HEK293 (cell line): ENCODE measurements at regions of chr12 and their contacts with region 1.

Region 1: GRCh38 chr12:2783936-2784600 is 10.7 kb upstream of the FKBP4 start:
- H3K4me3 ChIP-seq: no peak overlapping the region
- H3K27ac ChIP-seq: no peak overlapping the region
- H3K4me1 ChIP-seq: peaks cover 11% of the 10 kb centered on the region
- CTCF ChIP-seq: peak; percentile 87

Region 2: GRCh38 chr12:2682296-2683251 is 101.5 kb before region 1 on chr12:
- CTCF ChIA-PET with region 1: interaction called, 15 read pairs
- POLR2A ChIA-PET with region 1: no interaction called
- H3K4me3 ChIP-seq: no peak overlapping the region
- H3K27ac ChIP-seq: no peak overlapping the region
- H3K4me1 ChIP-seq: no peaks in the 10 kb centered on the region
- CTCF ChIP-seq: no peak; the same call in 1 of the 2 replicates

Region 3: GRCh38 chr12:2739817-2740641 is 44.0 kb before region 1 on chr12:
- CTCF ChIA-PET with region 1: interaction called, 11 read pairs
- POLR2A ChIA-PET with region 1: no interaction called
- H3K4me3 ChIP-seq: no peak overlapping the region
- H3K27ac ChIP-seq: no peak overlapping the region
- H3K4me1 ChIP-seq: no peaks in the 10 kb centered on the region
- CTCF ChIP-seq: no peak; the same call in 1 of the 2 replicates

Region 4: GRCh38 chr12:2794736-2795289 is 10.7 kb after region 1 on chr12 and contains the start of gene FKBP4:
- CTCF ChIA-PET with region 1: interaction called, 12 read pairs
- POLR2A ChIA-PET with region 1: interaction called, 3 read pairs
- H3K4me3 ChIP-seq: peak within 1 kb of the TSS; percentile 73
- H3K27ac ChIP-seq: peak within 1 kb of the TSS; percentile 88; the same call in 1 of the 2 replicates
- H3K4me1 ChIP-seq: peaks cover 3% of the 10 kb centered on the region; the same call in 1 of the 2 replicates
- CTCF ChIP-seq: no peak

Region 5: DNA sequence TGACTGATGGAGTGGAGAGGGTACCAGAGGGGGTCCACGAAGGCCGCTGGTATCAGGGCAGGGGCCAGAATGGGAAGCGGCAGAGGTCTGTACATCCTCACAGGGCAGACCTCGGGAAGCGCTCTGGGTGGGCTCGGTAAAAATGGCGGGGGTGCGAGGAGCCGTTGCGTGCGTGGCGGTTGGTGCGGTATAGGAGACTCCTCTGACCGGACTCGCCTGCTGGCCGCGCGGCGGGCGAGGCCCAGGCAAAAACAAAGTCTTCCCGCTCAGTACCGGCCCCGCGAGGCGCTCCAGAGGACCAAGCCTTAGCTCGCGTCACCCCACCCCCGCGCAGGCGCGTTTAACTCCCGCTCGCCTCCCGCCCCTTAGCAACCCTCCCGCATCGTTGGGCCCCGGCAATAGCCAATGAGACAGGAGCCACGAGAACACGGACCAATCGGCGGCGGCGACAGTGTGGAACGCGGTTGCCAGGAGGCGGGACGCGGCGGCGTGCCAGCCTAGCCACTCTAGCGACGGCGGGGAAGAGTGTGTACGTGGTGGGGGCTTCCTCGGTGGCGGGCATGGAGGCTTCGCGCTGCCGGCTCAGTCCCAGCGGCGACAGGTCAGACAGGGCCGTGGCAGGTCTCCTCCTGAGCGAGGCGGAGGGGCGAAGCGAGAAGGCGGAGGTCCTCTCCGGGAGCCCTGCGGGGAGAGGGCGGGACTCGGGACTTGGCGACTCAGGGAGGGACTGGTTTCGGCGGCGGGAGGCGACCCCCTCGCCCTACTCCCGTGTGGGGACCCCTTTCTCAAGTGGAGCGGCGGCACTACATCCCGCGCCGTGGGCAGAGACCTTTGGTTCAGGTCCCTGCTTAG is 106.5 kb after region 1 on chr12 and contains the start of gene TULP3:
- CTCF ChIA-PET with region 1: no interaction called
- POLR2A ChIA-PET with region 1: no interaction called
- H3K4me3 ChIP-seq: peak within 1 kb of the TSS; percentile 93
- H3K27ac ChIP-seq: peak within 1 kb of the TSS; percentile 75
- H3K4me1 ChIP-seq: peaks cover 5% of the 10 kb centered on the region
- CTCF ChIP-seq: peak; percentile 27